ENCODE measurements at regions of chr2 and their contacts with region 1.

Region 1: GRCh38 chr2:210203157-210203947 is 21.9 kb downstream of the ACADL start:
- DNase-seq: no peak
- ATAC-seq: no peak
- H3K4me3 ChIP-seq: no peak overlapping the region
- H3K27ac ChIP-seq: no peak overlapping the region
- H3K4me1 ChIP-seq: no peaks in the 10 kb centered on the region
- H3K27me3 ChIP-seq: no peaks in the 10 kb centered on the region
- CTCF ChIP-seq: no peak
- POLR2A ChIP-seq: no peak

Region 2: GRCh38 chr2:209988010-209988409 is 215.3 kb before region 1 on chr2:
- intact Hi-C with region 1: loop called in 1 of 2 experiments (anchors 10 kb)
- DNase-seq: no peak
- ATAC-seq: no peak
- H3K4me3 ChIP-seq: no peak overlapping the region
- H3K27ac ChIP-seq: no peak overlapping the region
- H3K4me1 ChIP-seq: no peaks in the 10 kb centered on the region
- H3K27me3 ChIP-seq: peaks cover 4% of the 10 kb centered on the region in 2 donors
- CTCF ChIP-seq: no peak
- POLR2A ChIP-seq: no peak

Region 3: DNA sequence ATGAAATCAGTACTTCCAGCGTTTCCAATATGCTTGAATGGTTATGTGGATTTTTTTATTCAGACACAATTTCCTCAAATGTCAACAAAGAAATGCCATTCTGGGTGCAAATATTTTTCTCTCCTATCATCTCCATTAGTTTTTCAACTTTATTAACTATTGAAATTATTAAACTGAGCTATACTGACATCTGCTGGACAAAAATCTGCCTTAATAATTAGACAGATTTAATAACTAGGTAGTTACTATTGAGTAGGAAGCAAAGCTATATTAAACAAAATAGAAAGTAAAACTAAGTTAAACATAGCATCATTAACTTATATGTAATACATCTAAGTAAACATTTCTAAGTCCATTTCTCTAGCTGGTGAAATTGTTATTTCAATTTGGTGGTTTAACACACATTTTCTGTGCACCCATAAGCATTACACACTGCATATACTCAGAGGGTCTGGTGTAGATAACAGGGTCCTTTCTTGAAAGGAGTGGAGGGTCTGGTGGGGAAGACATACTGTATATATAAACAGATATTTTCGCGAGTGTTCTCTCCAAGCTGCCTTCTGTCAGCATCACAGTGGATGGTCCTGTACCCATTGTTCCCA is 196.2 kb after region 1 on chr2:
- intact Hi-C with region 1: no loop called
- DNase-seq: no peak
- ATAC-seq: peak in 3 of 4 donors; percentile 35 to 54 (median 51)
- H3K4me3 ChIP-seq: no peak overlapping the region
- H3K27ac ChIP-seq: no peak overlapping the region
- H3K4me1 ChIP-seq: no peaks in the 10 kb centered on the region
- H3K27me3 ChIP-seq: no peaks in the 10 kb centered on the region
- CTCF ChIP-seq: peak; percentile 42 to 63 (median 50)
- POLR2A ChIP-seq: no peak

Measured in right lobe of liver (tissue), 6 donors.